CD8-positive, alpha-beta T cell (primary cell): ENCODE measurements at regions of chr13 and their contacts with region 1.

Region 1: DNA sequence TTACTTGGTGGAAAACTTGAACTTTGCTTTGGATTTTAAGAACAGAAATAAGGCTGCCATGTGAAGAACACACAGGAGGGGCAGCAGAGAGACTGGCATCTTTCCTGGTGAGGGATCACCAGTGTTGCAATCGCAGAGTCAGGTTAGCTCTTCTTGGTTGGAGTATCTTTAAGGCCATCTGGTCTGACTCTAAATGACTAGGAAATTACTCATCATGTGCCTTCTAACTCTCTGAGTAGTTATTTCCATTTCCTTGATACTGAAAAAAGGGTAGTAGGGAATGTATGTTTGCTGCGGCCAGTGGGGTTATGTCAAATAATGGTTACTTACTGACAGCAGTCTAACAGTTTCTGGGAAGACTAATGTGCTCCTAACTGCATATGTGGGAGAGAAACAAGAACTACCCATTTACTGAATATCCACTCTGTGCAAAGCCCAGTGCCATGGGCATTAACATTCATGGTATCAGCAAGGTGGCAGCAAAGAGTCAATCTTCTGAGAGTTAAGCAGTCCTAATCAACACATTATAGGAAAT is 122.1 kb downstream of the COG6 start:
- DNase-seq: peak in 2 of 9 experiments; percentile 37 to 48
- ATAC-seq: peak; percentile 52
- H3K4me3 ChIP-seq: no peak overlapping the region
- H3K4me3 Mint-ChIP-seq: no peak overlapping the region
- H3K27ac ChIP-seq: no peak overlapping the region
- H3K27ac Mint-ChIP-seq: no peak overlapping the region
- H3K4me1 ChIP-seq: peaks cover 25% of the 10 kb centered on the region
- H3K4me1 Mint-ChIP-seq: peaks cover 31% of the 10 kb centered on the region
- H3K27me3 ChIP-seq: no peaks in the 10 kb centered on the region
- H3K27me3 Mint-ChIP-seq: no peaks in the 10 kb centered on the region
- CTCF ChIP-seq: no peak

Region 2: DNA sequence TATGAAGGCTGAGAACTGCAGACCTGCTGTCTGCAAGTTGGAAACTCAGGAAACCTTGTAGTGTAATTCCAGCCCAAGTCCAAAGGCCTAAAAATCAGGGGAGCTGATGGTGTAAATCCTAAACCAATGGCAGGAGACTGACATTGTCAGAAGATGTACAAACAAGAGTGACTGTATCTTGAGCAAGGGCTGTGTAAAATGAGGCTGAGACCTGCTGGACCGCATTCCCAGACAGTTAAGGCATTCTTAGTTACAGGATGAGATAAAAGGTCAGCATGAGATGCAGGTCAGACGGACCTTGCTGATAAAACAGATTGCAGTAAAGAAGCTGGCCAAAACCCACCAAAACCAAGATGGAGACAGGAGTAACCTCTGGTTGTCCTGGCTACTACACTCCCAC is 25.6 kb after region 1 on chr13:
- CTCF ChIA-PET with region 1: no interaction called
- POLR2A ChIA-PET with region 1: no interaction called
- intact Hi-C with region 1: no loop called
- DNase-seq: no peak
- ATAC-seq: no peak
- H3K4me3 ChIP-seq: no peak overlapping the region
- H3K4me3 Mint-ChIP-seq: no peak overlapping the region
- H3K27ac ChIP-seq: no peak overlapping the region
- H3K27ac Mint-ChIP-seq: no peak overlapping the region
- H3K4me1 ChIP-seq: no peaks in the 10 kb centered on the region
- H3K4me1 Mint-ChIP-seq: no peaks in the 10 kb centered on the region
- H3K27me3 ChIP-seq: no peaks in the 10 kb centered on the region
- H3K27me3 Mint-ChIP-seq: no peaks in the 10 kb centered on the region
- CTCF ChIP-seq: no peak

Region 3: DNA sequence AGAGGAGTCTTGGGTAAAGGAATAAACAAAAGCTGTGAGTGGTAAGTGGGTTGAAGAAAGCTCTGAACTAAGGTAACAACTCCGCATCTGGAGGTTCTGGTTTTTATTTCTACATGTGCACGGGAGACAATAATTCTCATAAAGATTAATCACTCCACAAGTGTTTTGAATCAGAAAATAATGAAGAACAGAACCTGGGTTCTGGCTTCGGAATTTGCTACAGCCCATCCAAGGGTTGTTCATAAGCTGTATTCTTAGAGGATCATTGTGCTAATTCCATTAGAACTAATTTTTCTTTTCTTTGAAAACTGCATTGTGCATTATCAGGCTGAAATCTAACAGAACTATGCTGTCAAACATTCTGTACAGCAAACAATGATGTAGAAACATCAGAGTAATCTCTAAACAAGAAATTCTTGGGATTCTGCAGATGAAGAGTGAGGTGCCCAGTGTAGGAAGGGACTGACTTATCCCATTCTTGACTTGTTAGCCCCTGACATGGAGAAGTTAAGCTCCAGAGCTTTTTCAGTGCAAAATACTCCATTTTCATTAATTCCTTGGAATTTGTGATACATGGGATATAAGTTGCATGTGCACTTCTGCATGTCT is 246.1 kb after region 1 on chr13:
- CTCF ChIA-PET with region 1: no interaction called
- POLR2A ChIA-PET with region 1: no interaction called
- intact Hi-C with region 1: no loop called
- DNase-seq: no peak
- ATAC-seq: no peak
- H3K4me3 ChIP-seq: no peak overlapping the region
- H3K4me3 Mint-ChIP-seq: no peak overlapping the region
- H3K27ac ChIP-seq: no peak overlapping the region
- H3K27ac Mint-ChIP-seq: no peak overlapping the region
- H3K4me1 ChIP-seq: peaks cover 11% of the 10 kb centered on the region
- H3K4me1 Mint-ChIP-seq: peaks cover 18% of the 10 kb centered on the region
- H3K27me3 ChIP-seq: no peaks in the 10 kb centered on the region
- H3K27me3 Mint-ChIP-seq: no peaks in the 10 kb centered on the region
- CTCF ChIP-seq: no peak

Region 4: GRCh38 chr13:40589285-40590109 is 811.9 kb after region 1 on chr13:
- CTCF ChIA-PET with region 1: no interaction called
- POLR2A ChIA-PET with region 1: no interaction called
- intact Hi-C with region 1: loop called in 1 of 2 experiments (anchors 5 kb)
- DNase-seq: peak in 1 of 9 experiments; percentile 39
- ATAC-seq: peak; percentile 13
- H3K4me3 ChIP-seq: peak overlapping the region in 1 of 2 experiments; percentile 11
- H3K4me3 Mint-ChIP-seq: peak overlapping the region; percentile 50
- H3K27ac ChIP-seq: peak overlapping the region in 1 of 2 experiments; percentile 44
- H3K27ac Mint-ChIP-seq: peak overlapping the region; percentile 84
- H3K4me1 ChIP-seq: peaks cover 93% of the 10 kb centered on the region
- H3K4me1 Mint-ChIP-seq: peaks cover 97% of the 10 kb centered on the region
- H3K27me3 ChIP-seq: no peaks in the 10 kb centered on the region
- H3K27me3 Mint-ChIP-seq: no peaks in the 10 kb centered on the region
- CTCF ChIP-seq: no peak

Region 5: DNA sequence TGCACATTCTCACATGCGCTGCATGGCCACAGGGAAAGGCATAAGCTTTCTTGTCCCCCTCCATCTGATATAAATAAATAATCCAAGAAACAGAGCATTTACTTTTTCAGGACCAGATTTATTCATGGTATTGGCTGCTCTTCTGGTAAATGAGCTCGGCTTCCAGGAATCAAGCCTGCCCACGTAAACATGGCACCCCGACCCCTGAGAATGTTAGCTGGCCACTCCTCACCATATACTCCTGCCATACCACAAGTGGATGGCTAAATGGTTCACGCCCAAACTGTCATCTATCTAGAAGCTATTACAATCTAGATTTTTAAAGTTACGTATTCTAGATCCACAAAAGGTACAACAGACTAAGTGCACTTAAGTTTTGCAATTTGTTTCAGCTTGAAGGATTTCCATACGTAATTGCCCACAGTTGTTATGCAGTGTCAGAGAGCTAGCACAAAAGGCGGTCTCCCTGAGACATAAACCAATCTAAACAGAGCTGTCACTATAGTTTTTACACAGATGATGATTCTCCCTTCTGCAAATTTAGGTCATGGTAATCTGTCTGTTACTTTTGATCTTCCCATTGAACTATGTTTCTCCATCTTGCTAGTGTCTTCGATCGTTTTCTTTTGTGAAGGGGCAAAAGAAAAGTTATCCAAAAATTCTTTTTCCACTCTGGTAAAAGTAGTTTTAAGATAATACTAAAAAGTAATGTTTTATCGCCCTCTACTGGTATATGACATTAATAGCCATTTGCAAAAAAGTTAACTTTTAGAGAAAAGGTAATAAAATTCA is 905.1 kb after region 1 on chr13:
- CTCF ChIA-PET with region 1: interaction called, 9 read pairs
- POLR2A ChIA-PET with region 1: no interaction called
- intact Hi-C with region 1: loop called (anchors 2 to 5 kb)
- DNase-seq: peak in 2 of 9 experiments; percentile 27 to 51
- ATAC-seq: peak; percentile 48
- H3K4me3 ChIP-seq: no peak overlapping the region
- H3K4me3 Mint-ChIP-seq: no peak overlapping the region
- H3K27ac ChIP-seq: no peak overlapping the region
- H3K27ac Mint-ChIP-seq: peak overlapping the region; percentile 6
- H3K4me1 ChIP-seq: peaks cover 6% of the 10 kb centered on the region
- H3K4me1 Mint-ChIP-seq: peaks cover 9% of the 10 kb centered on the region
- H3K27me3 ChIP-seq: no peaks in the 10 kb centered on the region
- H3K27me3 Mint-ChIP-seq: no peaks in the 10 kb centered on the region
- CTCF ChIP-seq: peak; percentile 87